Heart right ventricle (tissue), 16 donors: ENCODE measurements at regions of chr19 and their contacts with region 1.

Region 1: DNA sequence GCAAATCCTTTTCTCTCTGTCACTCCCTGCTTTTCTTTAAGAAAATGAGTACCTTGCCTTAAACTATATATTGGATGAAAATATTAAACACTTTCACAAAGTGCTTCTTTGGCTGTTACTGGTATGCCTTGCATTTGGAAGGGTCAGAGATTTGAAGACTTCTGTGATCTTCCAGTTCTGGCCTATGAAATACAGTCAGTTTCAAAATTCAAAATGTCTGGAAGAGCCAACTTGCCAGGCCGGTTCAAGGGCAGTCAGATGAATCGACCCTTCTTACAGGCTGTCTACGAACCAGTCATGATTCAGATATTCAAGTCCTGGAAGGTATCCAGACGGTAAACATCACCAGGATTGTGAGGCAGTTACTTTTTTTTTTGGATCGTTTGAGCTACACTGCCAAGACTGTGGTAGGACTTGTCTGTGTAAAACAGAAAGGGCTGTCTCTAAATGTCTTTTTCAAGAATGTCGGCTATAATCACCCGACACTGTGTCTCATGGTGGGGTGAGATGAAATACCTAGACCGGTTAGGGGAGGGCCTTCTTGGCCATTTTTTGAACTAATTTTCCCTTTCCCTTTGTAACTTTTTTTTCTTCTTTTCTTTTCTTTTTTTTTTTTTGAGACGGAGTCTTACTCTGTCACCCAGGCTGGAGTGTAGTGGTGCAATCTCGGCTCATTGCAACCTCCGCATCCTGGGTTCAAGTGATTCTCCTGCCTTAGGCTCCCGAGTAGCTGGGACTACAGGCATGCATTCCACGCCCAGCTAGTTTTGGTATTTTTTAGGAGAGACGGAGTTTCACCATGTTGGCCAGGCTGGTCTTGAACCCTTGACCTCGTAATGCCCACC is 11.2 kb downstream of the ACTN4 start:
- DNase-seq: peak in 1 of 2 donors; percentile 74
- ATAC-seq: peak; percentile 55 to 84 (median 74)
- H3K4me3 ChIP-seq: peak overlapping the region in 6 of 10 donors; percentile 4 to 20 (median 13)
- H3K27ac ChIP-seq: peak overlapping the region; percentile 65 to 99 (median 96)
- H3K4me1 ChIP-seq: peaks cover 52 to 100% (median 100%) of the 10 kb centered on the region in 9 donors
- H3K27me3 ChIP-seq: no peaks in the 10 kb centered on the region
- CTCF ChIP-seq: no peak

Region 2: DNA sequence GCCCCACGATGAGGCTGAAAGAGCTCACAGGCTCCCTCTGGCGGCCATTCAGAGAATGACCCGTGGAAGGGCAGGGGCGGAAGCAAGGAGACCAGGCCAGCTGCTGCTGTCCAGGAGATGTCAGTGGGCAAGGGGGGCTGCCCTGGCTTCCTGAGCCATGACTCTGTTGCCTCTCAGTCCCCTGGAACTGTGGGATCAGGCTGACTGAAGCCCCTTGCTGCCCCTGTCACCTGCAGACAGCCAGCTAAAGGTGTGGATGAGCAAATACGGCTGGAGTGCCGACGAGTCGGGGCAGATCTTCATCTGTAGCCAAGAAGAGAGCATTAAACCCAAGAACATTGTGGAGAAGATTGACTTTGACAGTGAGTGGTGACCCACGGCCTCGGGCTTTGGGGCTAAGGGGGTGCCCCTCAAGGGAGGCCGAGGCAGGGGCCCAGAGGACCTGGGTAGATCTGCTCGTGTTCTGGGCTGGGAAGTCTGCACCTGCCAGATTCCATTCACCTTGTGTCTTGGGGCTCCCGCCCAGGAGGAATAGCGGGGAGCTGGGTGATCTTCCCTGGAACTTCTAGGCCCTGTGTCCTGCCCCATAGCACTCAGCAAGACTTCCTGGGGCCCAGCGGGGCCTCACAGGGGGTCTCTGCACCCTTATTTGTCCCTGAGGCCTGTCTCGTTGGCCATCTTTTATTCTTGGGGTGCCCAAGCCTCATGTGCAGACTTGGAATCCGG is 23.8 kb before region 1 on chr19:
- intact Hi-C with region 1: no loop called
- DNase-seq: peak; percentile 78 to 82
- ATAC-seq: peak in 7 of 8 donors; percentile 41 to 65 (median 47)
- H3K4me3 ChIP-seq: no peak overlapping the region
- H3K27ac ChIP-seq: peak overlapping the region in 8 of 10 donors; percentile 5 to 89 (median 58)
- H3K4me1 ChIP-seq: peaks cover 0 to 38% (median 29%) of the 10 kb centered on the region in 9 donors
- H3K27me3 ChIP-seq: no peaks in the 10 kb centered on the region
- CTCF ChIP-seq: peak; percentile 87 to 98 (median 95)

Region 3: DNA sequence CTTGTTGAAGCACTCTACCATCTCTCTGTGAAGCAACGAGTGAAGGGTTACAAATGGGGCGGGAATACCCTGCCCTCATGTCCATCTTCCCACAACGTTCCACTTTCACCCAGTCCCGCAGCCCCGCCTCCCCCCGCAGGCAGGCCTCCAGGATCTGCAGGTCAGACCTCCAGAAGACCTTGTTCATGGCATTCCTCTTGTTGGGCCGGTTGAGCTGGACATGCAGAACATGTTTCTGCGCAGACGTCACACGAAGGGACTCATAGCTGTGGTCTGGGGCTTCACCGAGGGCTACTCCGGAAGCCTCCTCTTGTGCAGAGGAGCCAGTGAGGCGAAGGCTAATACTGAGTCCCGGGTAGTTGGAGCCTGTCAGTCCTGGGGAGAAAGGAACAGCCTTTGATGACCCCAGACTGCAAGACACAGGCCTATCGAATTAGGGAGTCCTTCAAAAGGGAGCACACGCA is 172.5 kb after region 1 on chr19:
- intact Hi-C with region 1: loop called in 1 of 10 experiments (anchors 10 kb)
- DNase-seq: peak; percentile 54 to 75
- ATAC-seq: peak; percentile 35 to 67 (median 62)
- H3K4me3 ChIP-seq: peak overlapping the region; percentile 64 to 92 (median 74)
- H3K27ac ChIP-seq: peak overlapping the region; percentile 86 to 99 (median 94)
- H3K4me1 ChIP-seq: peaks cover 8 to 55% (median 40%) of the 10 kb centered on the region in 9 donors
- H3K27me3 ChIP-seq: no peaks in the 10 kb centered on the region
- CTCF ChIP-seq: no peak